ENCODE measurements at regions of chr6 and their contacts with region 1.

Region 1: DNA sequence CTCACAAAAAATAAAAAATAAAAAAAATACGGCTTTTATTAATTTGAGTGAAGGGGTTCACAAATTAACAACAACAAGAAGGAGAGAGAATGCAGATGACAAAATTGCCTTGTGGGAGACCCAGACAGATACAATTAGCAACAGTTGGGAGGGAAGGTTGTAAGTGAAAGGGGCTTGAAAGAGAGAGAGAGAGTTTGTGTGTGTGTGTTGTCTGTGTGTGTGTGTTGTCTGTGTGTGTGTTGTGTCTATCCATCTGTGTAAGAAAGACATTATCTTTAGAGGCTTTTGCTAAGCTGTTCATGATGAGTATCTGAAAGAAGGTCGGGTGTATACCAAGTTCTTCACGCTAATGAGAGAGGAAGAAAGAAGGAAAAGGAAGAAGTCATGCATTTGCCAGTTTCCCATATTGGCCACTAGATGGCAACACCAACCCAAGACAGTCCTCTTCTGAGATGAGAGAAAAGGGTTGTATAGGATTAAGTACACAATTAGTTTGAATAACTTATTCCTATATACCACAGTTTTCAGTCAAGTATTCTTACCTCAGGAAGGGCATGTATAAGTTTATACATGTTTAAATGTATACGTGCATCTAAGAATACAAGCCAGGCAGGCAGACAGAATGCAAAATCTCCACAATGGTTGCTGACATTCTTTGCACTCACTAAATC is 63.7 kb upstream of the CD2AP start:
- DNase-seq: peak; percentile 84
- H3K4me3 Mint-ChIP-seq: peak overlapping the region; percentile 66
- H3K27ac Mint-ChIP-seq: peak overlapping the region; percentile 84
- H3K4me1 Mint-ChIP-seq: peaks cover 22% of the 10 kb centered on the region
- H3K27me3 Mint-ChIP-seq: peaks cover 19% of the 10 kb centered on the region

Region 2: DNA sequence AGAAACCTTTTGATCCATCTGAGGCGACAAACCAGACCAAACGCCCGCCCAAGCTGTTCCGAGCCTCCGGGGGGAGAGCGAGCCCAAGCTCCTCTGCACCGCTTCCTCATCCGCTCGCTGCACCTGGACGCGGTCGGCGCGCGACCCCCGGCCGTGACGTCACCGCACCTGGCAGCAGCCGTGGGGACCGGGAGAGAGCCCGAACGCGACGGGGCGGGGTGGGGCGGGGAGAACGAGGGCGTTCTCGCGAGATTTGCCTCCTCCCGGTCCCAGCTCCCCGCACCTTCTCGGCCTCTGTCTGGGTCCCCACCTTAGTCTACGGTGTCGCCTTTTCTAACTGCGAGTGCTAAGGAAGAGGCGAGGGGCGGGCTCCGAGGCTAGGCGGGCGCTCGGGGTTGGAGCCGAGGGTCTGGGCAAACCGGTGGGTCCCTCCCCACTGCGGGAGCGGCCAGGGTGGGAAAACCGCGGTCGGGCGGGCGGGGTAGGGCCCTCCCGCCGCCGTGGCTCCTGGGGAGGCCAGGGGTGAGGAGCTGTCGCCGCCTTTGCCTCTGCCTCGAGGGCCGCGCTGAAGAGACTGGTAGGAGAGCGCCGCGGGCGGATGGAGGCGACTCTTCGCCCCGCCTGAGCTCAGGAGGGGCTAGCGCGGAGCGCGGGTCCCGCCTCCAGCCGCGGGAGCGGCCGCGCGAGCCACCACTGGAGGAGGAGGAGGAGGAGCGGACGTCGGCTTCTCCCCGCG is 63.8 kb after region 1 on chr6 and contains the start of gene CD2AP:
- intact Hi-C with region 1: loop called (anchors 1 kb)
- DNase-seq: peak; percentile 95
- H3K4me3 Mint-ChIP-seq: peak within 1 kb of the TSS; percentile 95
- H3K27ac Mint-ChIP-seq: peak within 1 kb of the TSS; percentile 95
- H3K4me1 Mint-ChIP-seq: peaks cover 23% of the 10 kb centered on the region
- H3K27me3 Mint-ChIP-seq: no peaks in the 10 kb centered on the region
- total RNA-seq, gene CD2AP: 26.3 and 29.6 TPM in 2 replicates

Region 3: GRCh38 chr6:47535316-47536225 is 121.7 kb after region 1 on chr6:
- intact Hi-C with region 1: loop called (anchors 10 kb)
- DNase-seq: no peak
- H3K4me3 Mint-ChIP-seq: no peak overlapping the region
- H3K27ac Mint-ChIP-seq: no peak overlapping the region
- H3K4me1 Mint-ChIP-seq: peaks cover 4% of the 10 kb centered on the region
- H3K27me3 Mint-ChIP-seq: no peaks in the 10 kb centered on the region

Region 4: GRCh38 chr6:47631269-47631772 is 217.4 kb after region 1 on chr6:
- intact Hi-C with region 1: loop called (anchors 1 kb)
- DNase-seq: peak; percentile 67
- H3K4me3 Mint-ChIP-seq: no peak overlapping the region
- H3K27ac Mint-ChIP-seq: no peak overlapping the region
- H3K4me1 Mint-ChIP-seq: peaks cover 9% of the 10 kb centered on the region
- H3K27me3 Mint-ChIP-seq: peaks cover 3% of the 10 kb centered on the region

Region 5: DNA sequence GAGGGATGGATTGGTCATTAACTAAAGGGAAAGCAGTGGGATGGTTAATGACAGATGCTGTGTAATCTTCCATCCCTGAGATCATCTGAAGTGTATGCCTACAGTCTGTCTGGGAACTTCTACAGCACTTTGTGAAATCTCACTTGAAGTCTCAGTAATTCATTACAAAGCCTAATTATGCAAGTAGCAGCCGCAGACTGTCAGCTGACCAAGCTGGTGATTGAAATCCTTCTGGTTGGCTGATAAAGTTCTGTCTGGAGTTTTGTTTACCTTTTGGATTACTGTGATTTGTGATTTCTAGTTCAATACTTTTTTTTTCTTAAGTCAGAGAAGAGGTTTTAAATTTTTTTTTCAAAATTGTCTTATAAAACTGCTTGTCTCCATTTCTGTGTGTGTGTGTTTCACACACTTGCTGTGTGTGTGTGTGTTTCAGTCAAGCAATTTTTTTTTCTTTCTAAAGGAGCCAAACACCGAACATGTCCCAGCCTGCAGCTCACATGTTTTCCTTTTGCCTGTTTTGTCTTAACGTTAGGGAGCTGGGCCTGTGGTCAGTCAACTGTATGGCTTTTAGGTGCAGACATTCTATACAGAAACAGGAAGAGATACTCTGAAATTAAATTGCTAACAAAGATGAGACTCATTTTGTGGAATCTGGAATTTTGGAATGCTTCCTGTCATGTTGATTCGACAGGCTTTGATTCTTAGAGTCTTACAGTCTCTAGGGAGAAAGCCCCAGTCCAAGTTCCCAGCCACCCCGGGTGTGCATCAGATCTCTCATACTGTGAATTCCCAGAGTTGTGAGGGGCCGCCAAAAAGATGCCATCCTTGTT is 256.0 kb after region 1 on chr6:
- intact Hi-C with region 1: no loop called
- DNase-seq: no peak
- H3K4me3 Mint-ChIP-seq: no peak overlapping the region
- H3K27ac Mint-ChIP-seq: no peak overlapping the region
- H3K4me1 Mint-ChIP-seq: no peaks in the 10 kb centered on the region
- H3K27me3 Mint-ChIP-seq: peaks cover 29% of the 10 kb centered on the region

Region 6: GRCh38 chr6:47733879-47734558 is 320.1 kb after region 1 on chr6:
- intact Hi-C with region 1: loop called (anchors 2 kb)
- DNase-seq: peak; percentile 63
- H3K4me3 Mint-ChIP-seq: no peak overlapping the region
- H3K27ac Mint-ChIP-seq: no peak overlapping the region
- H3K4me1 Mint-ChIP-seq: peaks cover 2% of the 10 kb centered on the region
- H3K27me3 Mint-ChIP-seq: peaks cover 9% of the 10 kb centered on the region

Region 7: DNA sequence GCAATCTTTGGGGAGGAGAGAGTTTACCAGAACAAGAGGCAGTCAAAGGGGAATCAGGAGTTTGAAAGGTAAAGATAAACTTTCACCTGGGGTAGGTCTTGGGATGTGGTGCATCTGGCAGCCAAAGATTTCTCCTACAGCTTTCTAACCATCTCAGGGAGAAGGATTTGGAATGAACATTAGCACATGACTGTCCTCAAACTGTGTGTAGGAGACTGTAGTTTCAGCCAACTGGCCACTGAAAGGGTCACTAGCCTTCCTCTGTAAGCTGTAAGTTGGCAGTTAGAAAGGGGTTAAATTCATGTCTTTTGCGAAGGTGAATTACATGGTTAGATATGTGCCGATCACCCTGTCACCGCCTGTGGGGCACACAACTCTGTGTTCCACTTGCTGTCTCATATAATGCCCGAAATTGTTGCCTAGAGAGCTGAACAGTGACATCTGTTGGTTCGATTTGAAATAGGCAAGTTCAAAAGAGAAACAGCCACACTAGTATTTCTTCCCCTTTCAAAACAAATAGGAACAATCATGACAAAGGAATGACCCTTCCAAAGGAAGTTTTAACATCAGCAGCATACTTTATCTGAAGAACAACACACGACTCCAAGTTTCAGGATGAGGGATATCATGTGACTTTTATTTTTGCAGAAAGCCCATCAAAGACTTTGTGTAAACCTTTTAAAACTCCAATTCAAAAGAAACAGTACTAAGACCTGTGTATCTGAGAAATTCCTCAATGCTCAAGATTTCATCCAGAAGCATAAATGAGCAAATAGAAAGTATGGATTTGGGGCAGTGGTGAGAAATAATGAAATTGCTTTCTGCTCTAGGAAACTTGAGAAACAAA is 366.8 kb after region 1 on chr6:
- intact Hi-C with region 1: loop called (anchors 1 kb)
- DNase-seq: peak; percentile 79
- H3K4me3 Mint-ChIP-seq: no peak overlapping the region
- H3K27ac Mint-ChIP-seq: no peak overlapping the region
- H3K4me1 Mint-ChIP-seq: peaks cover 8% of the 10 kb centered on the region
- H3K27me3 Mint-ChIP-seq: peaks cover 34% of the 10 kb centered on the region